ENCODE measurements at regions of chr4 and their contacts with region 1.

Region 1: GRCh38 chr4:37780444-37781150 is 45.9 kb upstream of the PGM2 start:
- DNase-seq: peak; percentile 26
- CTCF ChIP-seq: no peak

Region 2: DNA sequence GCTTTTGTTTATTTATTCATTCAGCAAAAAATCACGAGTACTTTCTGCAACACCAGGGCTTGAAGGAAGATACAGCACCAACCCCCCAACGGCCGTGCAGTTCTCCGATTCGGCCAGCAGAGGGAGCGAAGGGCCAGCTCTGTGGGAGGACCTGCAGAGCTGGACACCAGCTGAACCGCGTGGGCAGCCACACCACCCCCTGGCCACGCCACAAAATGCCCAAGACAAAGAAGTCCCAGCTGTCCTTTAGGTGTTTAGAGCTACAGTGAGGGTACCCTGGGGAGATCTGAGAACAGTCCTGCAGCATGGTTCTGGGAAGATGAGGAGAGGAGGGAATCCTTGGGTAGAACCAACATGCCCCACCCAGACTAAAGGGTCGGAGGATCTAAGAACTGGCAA is 177.5 kb before region 1 on chr4:
- in situ Hi-C with region 1: loop called (anchors 10 kb)
- DNase-seq: peak; percentile 85
- CTCF ChIP-seq: peak; percentile 93